Lower leg skin (tissue), 4 donors: ENCODE measurements at regions of chr15 and their contacts with region 1.

Region 1: GRCh38 chr15:99371180-99372103 is 120.2 kb downstream of the LRRC28 start:
- DNase-seq: no peak
- H3K4me3 ChIP-seq: no peak overlapping the region
- CTCF ChIP-seq: no peak
- POLR2A ChIP-seq: no peak

Region 2: GRCh38 chr15:100284701-100285100 is 913.3 kb after region 1 on chr15:
- intact Hi-C with region 1: loop called (anchors 5 kb)
- DNase-seq: peak in 1 of 2 donors; percentile 68
- H3K4me3 ChIP-seq: no peak overlapping the region
- CTCF ChIP-seq: no peak
- POLR2A ChIP-seq: no peak